Activated CD8-positive, alpha-beta memory T cell treated with anti-CD3 and anti-CD28 coated beads, Interleukin-2, amount 10 ng/mL, durations not matched to agents 7 days and 5 days (primary cell): ENCODE measurements at regions of chr6 and their contacts with region 1.

Region 1: DNA sequence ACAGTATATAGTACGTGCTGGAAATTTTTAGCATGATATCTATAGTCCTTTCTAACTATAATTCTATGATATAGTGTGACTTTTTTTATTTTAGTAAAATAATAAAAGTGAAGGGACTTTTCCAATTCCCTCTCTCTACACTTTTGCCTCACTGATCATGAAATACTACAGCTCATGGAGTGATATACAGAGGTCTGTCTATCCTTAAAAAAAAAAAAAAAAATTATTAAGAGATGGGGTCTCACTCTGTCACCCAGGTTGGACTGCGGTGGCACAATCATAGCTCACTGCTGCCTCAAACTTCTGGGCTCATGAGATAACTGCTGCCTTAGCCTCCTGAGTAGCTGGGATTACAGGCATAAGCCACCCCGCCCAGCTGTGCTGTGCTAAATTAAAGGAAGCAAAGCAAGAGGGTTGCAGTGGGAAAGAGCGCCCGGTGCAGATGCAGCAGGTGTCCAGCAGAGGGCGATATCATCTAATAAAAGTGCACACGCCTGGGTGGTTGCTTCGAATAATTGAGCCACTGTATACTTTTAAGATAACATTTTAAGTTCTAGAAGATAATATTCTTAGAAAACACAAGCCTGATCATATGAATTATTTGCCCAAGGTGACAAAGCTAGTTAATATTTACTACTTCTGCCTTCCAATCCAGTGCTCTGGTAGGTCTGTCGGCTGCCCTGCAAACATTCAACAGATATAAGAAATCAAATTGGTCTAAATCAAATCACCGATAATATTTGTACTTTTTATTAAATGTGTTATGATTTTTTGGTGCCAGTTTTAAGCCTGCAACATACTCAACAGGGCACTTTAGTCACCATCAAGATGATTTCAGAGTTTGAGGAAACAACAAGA is 94.9 kb upstream of the NT5E start:
- DNase-seq: peak; percentile 75
- ATAC-seq: peak; percentile 85
- H3K4me3 Mint-ChIP-seq: no peak overlapping the region
- H3K27ac Mint-ChIP-seq: no peak overlapping the region
- H3K4me1 Mint-ChIP-seq: no peaks in the 10 kb centered on the region
- H3K27me3 Mint-ChIP-seq: peaks cover 3% of the 10 kb centered on the region

Region 2: DNA sequence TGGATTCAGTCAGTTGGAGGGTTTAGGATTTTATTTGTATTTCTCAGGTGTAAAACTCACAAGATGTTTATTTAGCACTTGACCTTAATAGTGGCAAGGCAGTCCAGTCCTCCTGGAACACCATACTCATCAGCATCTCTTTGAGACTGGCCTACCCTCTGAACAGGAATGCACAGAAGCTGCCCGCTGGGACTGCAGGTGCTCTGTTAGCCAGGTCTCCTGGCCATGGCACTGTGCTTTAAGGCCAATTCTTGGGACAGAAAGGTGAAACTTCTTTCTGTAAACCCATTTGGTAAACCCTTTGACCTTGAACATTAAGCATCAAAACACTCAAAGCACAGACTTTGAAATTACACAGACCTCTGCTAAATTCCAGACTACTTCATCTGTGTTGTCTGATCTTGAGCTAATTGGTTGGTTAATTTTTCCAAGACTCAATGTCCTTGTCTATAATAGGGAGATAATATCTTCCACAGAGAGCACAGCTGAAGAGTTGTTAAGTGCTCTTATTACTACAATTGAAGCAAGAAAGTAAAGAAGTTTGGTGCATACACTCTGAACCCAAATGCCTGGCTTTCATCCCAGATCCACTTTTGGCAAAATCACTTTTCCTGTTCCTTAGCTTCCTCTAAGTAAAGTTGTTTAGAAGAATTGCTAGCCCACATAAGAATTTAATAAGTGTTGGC is 40.0 kb after region 1 on chr6:
- CTCF ChIA-PET with region 1: no interaction called
- DNase-seq: no peak
- ATAC-seq: no peak
- H3K4me3 Mint-ChIP-seq: no peak overlapping the region
- H3K27ac Mint-ChIP-seq: no peak overlapping the region
- H3K4me1 Mint-ChIP-seq: peaks cover 4% of the 10 kb centered on the region
- H3K27me3 Mint-ChIP-seq: no peaks in the 10 kb centered on the region

Region 3: GRCh38 chr6:85449818-85450759 is 95.1 kb after region 1 on chr6 and contains the start of gene NT5E:
- CTCF ChIA-PET with region 1: interaction called, 13 read pairs
- DNase-seq: peak; percentile 83
- ATAC-seq: peak; percentile 75
- H3K4me3 Mint-ChIP-seq: peak within 1 kb of the TSS; percentile 92
- H3K27ac Mint-ChIP-seq: peak within 1 kb of the TSS; percentile 94
- H3K4me1 Mint-ChIP-seq: peaks cover 58% of the 10 kb centered on the region
- H3K27me3 Mint-ChIP-seq: peaks cover 20% of the 10 kb centered on the region
- total RNA-seq, gene NT5E: 17.3 to 24.1 TPM

Region 4: GRCh38 chr6:85537055-85537494 is 182.1 kb after region 1 on chr6:
- CTCF ChIA-PET with region 1: interaction called, 16 read pairs
- DNase-seq: no peak
- ATAC-seq: no peak
- H3K4me3 Mint-ChIP-seq: no peak overlapping the region
- H3K27ac Mint-ChIP-seq: peak overlapping the region; percentile 19
- H3K4me1 Mint-ChIP-seq: peaks cover 2% of the 10 kb centered on the region
- H3K27me3 Mint-ChIP-seq: no peaks in the 10 kb centered on the region

Region 5: DNA sequence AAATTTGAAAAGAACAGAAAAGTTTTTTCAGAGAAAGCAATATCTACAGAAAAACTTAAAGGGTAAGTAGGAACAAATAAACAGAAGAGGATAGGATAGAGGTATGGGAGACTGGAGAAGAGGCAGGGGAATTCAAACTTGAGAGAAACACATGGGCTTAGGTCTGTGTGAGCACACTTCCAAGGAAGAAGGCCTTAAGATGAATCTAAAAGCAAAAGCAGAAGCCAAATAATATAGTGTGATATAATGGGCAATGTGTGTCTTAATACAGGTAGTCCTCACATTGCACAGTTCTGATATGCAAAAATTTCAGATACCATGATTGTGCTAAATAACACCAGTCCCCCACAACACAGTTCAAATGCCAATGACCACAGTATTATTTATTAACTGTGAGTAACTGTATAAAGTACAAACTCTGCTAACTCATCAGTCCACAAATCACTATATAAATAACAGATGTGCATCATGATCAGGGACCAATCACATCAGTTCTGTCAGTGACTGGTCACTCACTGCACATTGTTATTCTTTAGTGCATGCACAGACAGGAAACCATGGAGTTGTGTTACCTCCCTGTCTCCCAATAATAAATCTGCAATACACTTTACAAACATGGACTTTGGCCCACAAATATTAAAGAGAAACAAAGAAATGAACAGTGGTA is 220.1 kb after region 1 on chr6:
- CTCF ChIA-PET with region 1: no interaction called
- DNase-seq: no peak
- ATAC-seq: no peak
- H3K4me3 Mint-ChIP-seq: no peak overlapping the region
- H3K27ac Mint-ChIP-seq: no peak overlapping the region
- H3K4me1 Mint-ChIP-seq: peaks cover 13% of the 10 kb centered on the region
- H3K27me3 Mint-ChIP-seq: no peaks in the 10 kb centered on the region

Region 6: GRCh38 chr6:85685713-85686112 is 330.7 kb after region 1 on chr6:
- CTCF ChIA-PET with region 1: no interaction called
- DNase-seq: no peak
- ATAC-seq: peak; percentile 76
- H3K4me3 Mint-ChIP-seq: no peak overlapping the region
- H3K27ac Mint-ChIP-seq: peak overlapping the region; percentile 81
- H3K4me1 Mint-ChIP-seq: peaks cover 11% of the 10 kb centered on the region
- H3K27me3 Mint-ChIP-seq: no peaks in the 10 kb centered on the region